AG04449 (cell line): ENCODE measurements at regions of chr5 and their contacts with region 1.

Region 1: DNA sequence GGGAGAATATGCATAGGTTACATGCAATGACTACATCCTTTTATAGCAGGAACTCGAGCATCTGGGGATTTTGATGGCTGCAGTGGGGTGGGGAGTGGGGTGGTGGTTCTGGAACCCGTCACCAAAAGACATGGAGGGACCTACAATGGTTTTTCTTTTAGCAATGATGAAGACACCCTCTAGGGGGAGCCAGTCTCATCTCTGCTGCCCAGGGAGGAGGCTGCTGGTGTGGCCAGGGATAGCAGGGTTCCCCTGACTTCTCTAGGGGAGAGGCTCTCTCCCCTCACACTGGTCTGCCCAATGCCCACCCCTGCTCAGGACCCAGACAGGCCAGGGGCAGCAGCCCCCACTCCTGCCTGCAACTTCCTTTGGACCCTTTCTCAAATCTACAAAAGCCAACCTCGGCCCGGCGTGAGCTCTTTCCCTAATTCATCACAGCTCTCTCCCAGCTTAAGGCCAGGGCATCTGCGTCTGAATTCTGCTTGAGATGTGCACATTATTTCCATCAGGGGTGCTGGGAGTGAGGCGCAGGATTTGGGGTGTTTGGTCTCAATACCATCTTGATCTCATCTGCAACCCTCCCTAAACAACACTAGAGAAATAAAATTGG is 73.6 kb upstream of the RETREG1 start:
- DNase-seq: no peak
- H3K4me3 ChIP-seq: no peak overlapping the region
- CTCF ChIP-seq: peak; percentile 83

Region 2: GRCh38 chr5:16673241-16674201 is 16.8 kb before region 1 on chr5:
- CTCF ChIA-PET with region 1: interaction called, 75 read pairs
- POLR2A ChIA-PET with region 1: no interaction called
- DNase-seq: no peak
- H3K4me3 ChIP-seq: no peak overlapping the region
- CTCF ChIP-seq: no peak

Region 3: GRCh38 chr5:16679863-16680262 is 10.5 kb before region 1 on chr5:
- CTCF ChIA-PET with region 1: interaction called, 75 read pairs
- POLR2A ChIA-PET with region 1: no interaction called
- DNase-seq: no peak
- H3K4me3 ChIP-seq: no peak overlapping the region
- CTCF ChIP-seq: no peak

Region 4: DNA sequence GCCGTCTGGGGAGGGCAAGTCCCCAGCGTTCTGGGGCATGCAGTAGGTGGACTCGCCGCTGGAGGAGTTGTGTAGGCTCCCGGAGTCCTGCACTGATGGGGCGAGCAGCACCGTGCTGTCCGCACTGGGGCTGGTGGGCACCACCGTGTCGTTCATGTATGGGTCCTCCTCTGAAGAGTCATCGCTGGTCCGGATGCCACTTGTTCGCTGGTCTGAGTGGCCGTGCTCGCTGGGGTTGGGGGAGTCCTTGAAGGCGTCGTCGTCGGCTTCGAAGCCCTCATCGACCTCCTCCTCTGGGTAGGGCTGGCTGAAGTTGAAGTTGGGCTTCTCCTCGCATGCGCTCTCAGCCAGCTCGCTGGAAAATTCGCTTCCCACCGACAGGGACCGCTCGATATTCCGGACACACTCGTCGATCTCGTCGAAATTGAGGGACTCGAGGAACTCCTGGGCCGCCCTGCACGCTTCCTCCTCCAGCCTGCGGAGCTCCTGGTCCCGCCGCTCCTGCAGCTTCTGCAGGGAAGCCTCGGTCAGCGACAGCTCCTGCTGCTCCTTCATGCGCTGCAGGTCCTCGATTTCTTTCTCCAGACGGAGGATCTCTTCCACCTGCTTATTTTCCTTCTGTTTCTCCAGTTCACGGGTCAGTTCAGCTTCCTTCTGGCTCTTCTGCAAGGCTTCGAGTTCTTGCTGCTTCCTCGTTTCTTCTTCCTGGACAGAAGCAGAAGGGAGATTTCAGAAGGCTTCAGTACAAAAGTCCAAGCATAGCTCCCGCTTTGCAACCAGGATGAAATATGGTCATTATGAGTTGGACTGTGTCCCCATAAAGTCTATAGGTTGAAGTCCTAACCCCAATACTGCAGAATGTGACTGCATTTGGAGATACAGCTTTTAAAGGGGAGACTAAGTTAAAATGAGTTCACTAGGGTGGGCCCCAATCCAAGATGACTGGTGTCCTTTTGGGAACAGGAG is 11.1 kb after region 1 on chr5:
- CTCF ChIA-PET with region 1: interaction called, 39 read pairs
- POLR2A ChIA-PET with region 1: no interaction called
- DNase-seq: no peak
- H3K4me3 ChIP-seq: no peak overlapping the region
- CTCF ChIP-seq: no peak

Region 5: GRCh38 chr5:16707168-16707868 is 17.0 kb after region 1 on chr5:
- CTCF ChIA-PET with region 1: interaction called, 39 read pairs
- POLR2A ChIA-PET with region 1: no interaction called
- DNase-seq: no peak
- H3K4me3 ChIP-seq: no peak overlapping the region
- CTCF ChIP-seq: no peak

Region 6: GRCh38 chr5:16826379-16827125 is 136.2 kb after region 1 on chr5:
- CTCF ChIA-PET with region 1: no interaction called
- POLR2A ChIA-PET with region 1: no interaction called
- DNase-seq: no peak
- H3K4me3 ChIP-seq: no peak overlapping the region
- CTCF ChIP-seq: no peak

Region 7: GRCh38 chr5:17204133-17204489 is 513.8 kb after region 1 on chr5:
- CTCF ChIA-PET with region 1: interaction called, 54 read pairs
- POLR2A ChIA-PET with region 1: no interaction called
- DNase-seq: no peak
- H3K4me3 ChIP-seq: no peak overlapping the region
- CTCF ChIP-seq: no peak